Activated CD4-positive, alpha-beta memory T cell treated with anti-CD3 and anti-CD28 coated beads for 36 hours (primary cell): ENCODE measurements at regions of chr6 and their contacts with region 1.

Region 1: DNA sequence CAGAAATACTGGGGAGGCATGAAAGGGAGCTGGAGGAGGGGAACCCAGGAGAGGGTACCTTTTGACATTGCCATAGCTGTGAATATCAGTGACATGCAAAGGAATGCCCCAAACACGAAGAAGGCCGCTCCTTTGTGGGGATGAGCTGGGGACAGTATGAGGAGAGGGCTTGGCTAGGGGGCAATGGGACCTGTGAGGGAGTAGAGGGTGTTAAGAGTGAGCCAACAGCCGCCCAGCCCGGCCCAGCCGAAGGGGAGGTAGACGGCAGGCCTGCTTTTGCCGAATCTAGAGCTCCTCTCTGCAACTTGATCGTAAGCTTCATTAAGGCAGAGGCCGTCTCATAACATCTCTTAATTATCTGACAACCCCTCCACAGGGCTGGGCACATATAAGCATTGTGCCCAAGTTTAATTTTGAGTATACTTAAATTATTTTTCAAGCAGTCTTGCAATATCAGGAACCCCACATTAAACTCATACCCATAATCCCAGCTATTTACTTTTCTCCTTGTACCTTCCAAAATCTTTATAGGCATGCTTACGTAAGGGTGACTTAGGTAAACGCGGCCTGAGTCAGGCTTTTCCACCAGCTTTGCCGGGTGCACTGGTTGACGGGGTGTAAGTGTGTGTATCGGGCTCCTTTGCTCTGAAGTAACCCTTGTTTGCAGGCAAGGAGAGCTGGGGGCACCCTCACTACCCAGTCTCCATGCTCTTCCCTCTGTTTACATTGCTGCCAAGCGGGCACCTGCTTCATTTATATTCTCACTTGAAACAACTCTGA is 24.9 kb upstream of the VEGFA start:
- DNase-seq: no peak
- H3K4me3 Mint-ChIP-seq: no peak overlapping the region
- H3K27ac Mint-ChIP-seq: no peak overlapping the region
- H3K4me1 Mint-ChIP-seq: no peaks in the 10 kb centered on the region
- H3K27me3 Mint-ChIP-seq: peaks cover 6% of the 10 kb centered on the region

Region 2: GRCh38 chr6:43758617-43759050 is 13.5 kb after region 1 on chr6:
- CTCF ChIA-PET with region 1: interaction called, 10 read pairs
- POLR2A ChIA-PET with region 1: interaction called, 3 read pairs
- intact Hi-C with region 1: no loop called
- DNase-seq: peak; percentile 48
- H3K4me3 Mint-ChIP-seq: no peak overlapping the region
- H3K27ac Mint-ChIP-seq: no peak overlapping the region
- H3K4me1 Mint-ChIP-seq: peaks cover 5% of the 10 kb centered on the region
- H3K27me3 Mint-ChIP-seq: no peaks in the 10 kb centered on the region